IMR-90 (cell line): ENCODE measurements at regions of chr3 and their contacts with region 1.

Region 1: GRCh38 chr3:161851941-161852566 is 355.4 kb downstream of the OTOL1 start:
- DNase-seq: peak; percentile 27
- ATAC-seq: peak; percentile 76
- H3K4me3 ChIP-seq: no peak overlapping the region
- H3K27ac ChIP-seq: no peak overlapping the region
- H3K4me1 ChIP-seq: no peaks in the 10 kb centered on the region
- H3K27me3 ChIP-seq: no peaks in the 10 kb centered on the region
- CTCF ChIP-seq: peak; percentile 73
- POLR2A ChIP-seq: no peak
- RAD21 ChIP-seq: peak; percentile 79

Region 2: GRCh38 chr3:161540594-161540993 is 311.5 kb before region 1 on chr3:
- CTCF ChIA-PET with region 1: no interaction called
- POLR2A ChIA-PET with region 1: no interaction called
- dilution Hi-C with region 1: no loop called
- in situ Hi-C with region 1: no loop called
- intact Hi-C with region 1: no loop called
- DNase-seq: no peak
- ATAC-seq: no peak
- H3K4me3 ChIP-seq: no peak overlapping the region
- H3K27ac ChIP-seq: no peak overlapping the region
- H3K4me1 ChIP-seq: no peaks in the 10 kb centered on the region
- H3K27me3 ChIP-seq: no peaks in the 10 kb centered on the region
- CTCF ChIP-seq: no peak
- POLR2A ChIP-seq: no peak
- RAD21 ChIP-seq: no peak

Region 3: GRCh38 chr3:161559177-161559998 is 292.7 kb before region 1 on chr3:
- CTCF ChIA-PET with region 1: no interaction called
- POLR2A ChIA-PET with region 1: no interaction called
- dilution Hi-C with region 1: no loop called
- in situ Hi-C with region 1: no loop called
- intact Hi-C with region 1: no loop called
- DNase-seq: peak; percentile 9
- ATAC-seq: no peak
- H3K4me3 ChIP-seq: no peak overlapping the region
- H3K27ac ChIP-seq: no peak overlapping the region
- H3K4me1 ChIP-seq: no peaks in the 10 kb centered on the region
- H3K27me3 ChIP-seq: no peaks in the 10 kb centered on the region
- CTCF ChIP-seq: peak; percentile 63
- POLR2A ChIP-seq: no peak
- RAD21 ChIP-seq: peak; percentile 58

Region 4: DNA sequence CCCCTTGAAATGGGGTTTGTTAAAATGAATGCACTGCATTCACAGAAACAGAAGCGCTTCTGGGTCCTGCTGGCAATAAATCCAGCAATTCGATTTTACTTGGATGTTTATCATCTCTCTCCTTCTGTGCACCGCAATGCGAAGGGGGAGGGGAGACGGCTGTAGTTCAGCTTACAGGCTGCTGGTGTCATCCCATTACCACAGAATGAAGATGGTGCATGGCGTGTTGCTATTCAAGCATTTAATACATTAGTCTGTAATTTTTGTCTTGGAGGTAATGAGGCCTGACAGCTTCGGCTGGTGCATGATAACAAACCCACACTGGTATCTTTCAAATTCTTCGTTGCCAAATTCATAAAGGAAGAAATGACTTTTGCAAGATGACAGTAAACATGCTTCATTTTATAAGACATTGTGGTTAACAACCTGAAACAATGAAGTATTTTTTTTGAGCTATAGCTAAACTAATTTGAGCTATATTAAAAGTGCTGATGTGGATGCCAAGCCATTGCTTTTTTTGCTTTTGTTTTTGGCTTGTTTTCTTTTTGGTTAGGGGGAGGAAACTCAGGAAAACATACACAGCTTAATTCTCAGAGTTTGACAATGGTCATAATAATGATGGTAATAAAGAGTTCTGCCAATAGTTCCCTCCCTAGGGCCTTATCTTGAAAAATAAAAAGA is 62.8 kb after region 1 on chr3:
- CTCF ChIA-PET with region 1: interaction called, 3 read pairs
- POLR2A ChIA-PET with region 1: no interaction called
- dilution Hi-C with region 1: no loop called
- in situ Hi-C with region 1: no loop called
- intact Hi-C with region 1: loop called (anchors 2 kb)
- DNase-seq: peak; percentile 59
- ATAC-seq: peak; percentile 94
- H3K4me3 ChIP-seq: no peak overlapping the region
- H3K27ac ChIP-seq: no peak overlapping the region
- H3K4me1 ChIP-seq: peaks cover 2% of the 10 kb centered on the region; the same call in 1 of the 2 replicates
- H3K27me3 ChIP-seq: no peaks in the 10 kb centered on the region
- CTCF ChIP-seq: peak; percentile 66
- POLR2A ChIP-seq: no peak
- RAD21 ChIP-seq: peak; percentile 78

Region 5: DNA sequence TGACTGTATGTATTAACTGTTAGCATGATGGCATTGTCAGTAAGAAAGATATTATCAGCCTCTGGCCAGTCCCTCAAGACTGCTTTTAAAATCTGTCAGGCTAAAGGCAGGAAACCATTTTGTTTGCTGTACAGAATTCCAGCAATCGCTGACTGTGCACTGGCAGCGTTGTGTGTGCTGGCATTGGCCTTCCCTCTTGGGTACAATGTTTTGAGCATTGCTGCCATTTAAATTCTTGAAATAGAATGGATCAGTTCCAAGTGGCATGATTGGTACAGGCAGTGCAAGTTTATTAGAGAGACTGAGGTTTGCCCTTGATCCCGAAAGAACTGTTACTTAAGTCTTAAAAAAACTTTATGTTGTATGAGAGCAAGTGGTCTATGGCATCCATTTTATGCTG is 433.2 kb after region 1 on chr3:
- CTCF ChIA-PET with region 1: no interaction called
- POLR2A ChIA-PET with region 1: no interaction called
- dilution Hi-C with region 1: no loop called
- in situ Hi-C with region 1: no loop called
- intact Hi-C with region 1: loop called (anchors 1 kb)
- DNase-seq: no peak
- ATAC-seq: no peak; the same call in 1 of the 2 replicates
- H3K4me3 ChIP-seq: no peak overlapping the region
- H3K27ac ChIP-seq: no peak overlapping the region
- H3K4me1 ChIP-seq: peaks cover 8% of the 10 kb centered on the region
- H3K27me3 ChIP-seq: no peaks in the 10 kb centered on the region
- CTCF ChIP-seq: no peak
- POLR2A ChIP-seq: no peak
- RAD21 ChIP-seq: no peak

Region 6: GRCh38 chr3:162525066-162525742 is 673.1 kb after region 1 on chr3:
- CTCF ChIA-PET with region 1: no interaction called
- POLR2A ChIA-PET with region 1: no interaction called
- dilution Hi-C with region 1: no loop called
- in situ Hi-C with region 1: no loop called
- intact Hi-C with region 1: no loop called
- DNase-seq: peak; percentile 94
- ATAC-seq: peak; percentile 98
- H3K4me3 ChIP-seq: no peak overlapping the region
- H3K27ac ChIP-seq: 0 out of 2 replicates have a peak overlapping the region, but pooled peaks have one; percentile 15
- H3K4me1 ChIP-seq: no peaks in the 10 kb centered on the region
- H3K27me3 ChIP-seq: no peaks in the 10 kb centered on the region
- CTCF ChIP-seq: no peak
- POLR2A ChIP-seq: no peak
- RAD21 ChIP-seq: no peak; the same call in 1 of the 2 replicates

Region 7: DNA sequence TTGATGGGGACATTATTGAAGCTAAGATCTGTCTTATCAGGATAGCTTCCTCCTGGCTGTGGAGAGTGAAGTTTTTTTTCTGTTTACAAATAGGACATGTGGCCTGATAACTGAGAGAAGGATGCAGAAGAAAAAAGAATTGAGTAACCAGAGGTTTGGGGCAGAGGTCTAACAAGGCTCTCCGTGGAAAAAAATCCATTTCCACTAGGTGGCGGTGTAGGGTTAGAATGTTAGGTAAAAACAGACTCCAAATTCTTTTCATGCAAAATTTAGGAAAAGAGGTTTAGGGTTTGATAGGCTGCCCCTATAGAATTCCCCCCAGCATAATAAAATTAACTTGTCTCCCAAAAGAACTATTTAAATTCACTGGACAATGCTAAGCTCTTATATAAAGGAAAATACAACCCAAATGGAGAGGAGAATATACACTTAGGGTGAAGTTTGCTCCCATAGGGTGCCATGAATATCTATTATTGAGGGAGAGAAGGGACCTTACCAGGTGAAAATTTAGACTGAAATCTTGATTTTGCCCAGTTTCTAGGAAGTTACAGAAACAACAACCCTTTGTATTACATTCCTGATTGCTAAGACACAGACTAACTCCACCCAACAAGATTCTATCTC is 1204.9 kb after region 1 on chr3:
- CTCF ChIA-PET with region 1: no interaction called
- POLR2A ChIA-PET with region 1: no interaction called
- dilution Hi-C with region 1: no loop called
- in situ Hi-C with region 1: no loop called
- intact Hi-C with region 1: loop called (anchors 5 kb)
- DNase-seq: peak; percentile 19
- ATAC-seq: no peak
- H3K4me3 ChIP-seq: no peak overlapping the region
- H3K27ac ChIP-seq: no peak overlapping the region
- H3K4me1 ChIP-seq: no peaks in the 10 kb centered on the region
- H3K27me3 ChIP-seq: no peaks in the 10 kb centered on the region
- CTCF ChIP-seq: peak; percentile 47
- POLR2A ChIP-seq: no peak
- RAD21 ChIP-seq: peak; percentile 28